Left cardiac atrium (tissue), 4 donors: ENCODE measurements at regions of chr3 and their contacts with region 1.

Region 1: DNA sequence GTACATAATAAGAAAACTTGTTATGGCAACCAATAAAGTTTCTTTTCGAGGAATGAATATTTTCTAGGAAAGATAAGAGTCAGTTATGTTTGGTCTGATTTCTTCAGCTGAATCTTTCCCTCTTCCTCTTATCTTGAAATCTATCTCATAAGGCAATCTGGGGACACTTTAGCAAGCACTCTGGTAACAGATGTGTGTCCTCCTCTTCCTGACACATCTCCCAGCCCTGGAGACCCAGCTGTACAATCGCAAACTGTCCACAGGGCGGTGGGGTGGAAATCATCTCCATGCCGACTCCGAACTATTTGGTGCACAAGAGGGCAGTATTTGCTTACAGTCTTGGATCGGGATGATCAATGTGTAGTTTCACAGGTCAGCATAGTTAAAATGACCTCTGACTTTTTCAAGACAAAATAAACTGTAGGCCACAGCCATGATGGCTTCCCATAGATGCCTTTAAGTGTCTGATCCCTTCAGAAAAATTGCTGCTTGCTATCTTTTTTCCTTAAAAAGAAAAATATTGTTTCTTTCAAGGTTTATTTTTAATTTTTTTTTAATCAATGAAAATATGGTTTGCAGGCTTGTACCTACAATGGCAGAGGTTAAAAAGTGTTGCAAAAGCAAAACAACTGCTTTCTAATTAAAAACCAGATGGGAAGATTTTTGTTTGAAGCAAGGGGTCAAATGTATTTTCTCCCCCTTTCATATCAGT is 17.7 kb downstream of the EEFSEC start:
- DNase-seq: peak; percentile 65
- ATAC-seq: peak; percentile 79 to 82

Region 2: DNA sequence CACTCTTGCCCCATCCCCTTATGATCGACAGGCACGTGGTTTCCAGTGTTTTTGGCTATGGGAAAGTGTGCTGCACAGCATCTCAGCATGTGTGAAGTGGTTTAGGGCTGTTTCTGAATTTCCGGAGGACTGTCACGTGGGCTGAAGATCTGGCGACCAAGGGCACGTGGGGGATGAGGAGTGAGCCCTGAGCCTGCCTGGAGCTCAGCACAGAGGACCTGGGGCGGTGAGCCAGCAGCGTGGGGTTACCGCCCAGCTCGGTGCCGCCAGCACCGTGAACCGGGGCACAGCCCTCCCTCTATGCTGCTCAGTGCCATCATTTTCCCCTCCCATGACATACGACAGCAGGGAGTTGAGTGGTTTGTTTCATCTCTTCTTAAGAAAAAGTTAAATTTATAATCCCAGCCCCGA is 145.5 kb after region 1 on chr3:
- intact Hi-C with region 1: loop called in 1 of 2 experiments (anchors 10 kb)
- DNase-seq: peak; percentile 40
- ATAC-seq: peak; percentile 37 to 50

Region 3: GRCh38 chr3:128489855-128490649 is 319.1 kb after region 1 on chr3:
- intact Hi-C with region 1: loop called (anchors 5 kb)
- DNase-seq: peak; percentile 30
- ATAC-seq: no peak